ENCODE measurements at regions of chr5 and their contacts with region 1.

Region 1: DNA sequence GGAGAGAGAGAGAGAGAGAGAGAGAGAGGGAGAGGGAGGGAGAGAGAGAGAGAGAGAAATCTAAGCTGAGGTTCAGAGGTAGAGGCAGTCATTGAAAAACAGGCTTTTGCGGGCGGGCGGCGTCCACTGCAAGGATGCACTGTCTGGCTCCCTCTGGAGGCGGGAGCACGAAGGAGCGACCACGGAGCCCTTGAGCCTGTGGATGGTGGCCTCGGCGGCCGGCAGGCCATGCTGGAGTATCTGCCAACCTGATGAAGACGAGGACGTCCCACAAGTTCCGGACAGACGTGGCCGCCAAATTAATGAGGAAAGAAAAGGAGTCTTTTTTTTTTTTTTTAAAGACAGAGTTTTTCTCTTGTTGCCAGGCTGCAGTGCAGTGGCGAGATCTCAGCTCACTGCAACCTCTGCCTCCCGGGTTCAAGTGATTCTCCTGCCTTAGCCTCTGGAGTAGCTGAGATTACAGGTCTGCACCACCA is 2.2 kb upstream of the CCDC125 start:
- DNase-seq: peak; percentile 13 to 92
- H3K4me3 ChIP-seq: peak overlapping the region in 1 of 2 donors; percentile 22
- H3K27ac ChIP-seq: no peak overlapping the region
- H3K4me1 ChIP-seq: peaks cover 0 to 9% of the 10 kb centered on the region in 2 donors
- H3K27me3 ChIP-seq: no peaks in the 10 kb centered on the region
- CTCF ChIP-seq: peak; percentile 61 to 86 (median 82)

Region 2: GRCh38 chr5:68983959-68984358 is 350.9 kb before region 1 on chr5:
- intact Hi-C with region 1: no loop called
- DNase-seq: no peak
- H3K4me3 ChIP-seq: no peak overlapping the region
- H3K27ac ChIP-seq: no peak overlapping the region
- H3K4me1 ChIP-seq: no peaks in the 10 kb centered on the region
- H3K27me3 ChIP-seq: no peaks in the 10 kb centered on the region
- CTCF ChIP-seq: no peak

Region 3: DNA sequence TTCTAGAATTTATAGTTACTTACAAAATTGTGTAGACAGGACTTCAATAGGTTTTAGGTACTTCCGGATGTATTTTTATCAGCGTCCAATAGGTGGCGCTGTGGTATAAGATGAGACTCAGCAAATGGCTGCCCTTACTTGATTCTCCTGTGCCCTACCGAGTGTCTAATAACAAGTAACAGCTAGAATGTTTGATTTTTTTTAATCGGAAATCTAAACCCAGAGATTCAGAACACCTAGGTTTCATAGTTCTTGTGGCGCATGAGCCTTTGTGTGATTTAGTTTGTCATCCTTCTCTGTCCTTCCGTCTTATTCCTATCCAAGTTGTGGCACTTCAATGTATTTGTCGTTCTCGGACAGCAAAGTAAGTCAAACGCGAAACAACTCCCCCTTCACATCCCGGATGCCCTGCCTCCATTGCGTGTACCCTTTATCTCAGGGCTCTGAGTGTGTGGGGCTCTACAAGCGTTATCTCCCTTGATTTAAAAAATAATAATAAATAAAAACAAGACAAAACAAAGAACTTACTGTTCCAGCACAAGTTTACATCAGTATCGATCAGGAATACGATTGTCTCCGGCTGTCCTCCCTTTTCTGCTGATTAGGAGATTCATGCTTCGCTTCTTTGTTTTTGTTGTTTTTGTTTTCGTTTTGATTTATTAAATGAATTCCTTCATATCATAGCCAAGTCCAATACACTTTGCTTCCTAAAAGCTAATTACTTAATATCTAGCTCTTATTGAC is 291.7 kb before region 1 on chr5:
- intact Hi-C with region 1: loop called (anchors 1 kb)
- DNase-seq: peak; percentile 15 to 88
- H3K4me3 ChIP-seq: peak overlapping the region; percentile 57 to 62
- H3K27ac ChIP-seq: peak overlapping the region; percentile 54 to 60
- H3K4me1 ChIP-seq: no peaks in the 10 kb centered on the region
- H3K27me3 ChIP-seq: no peaks in the 10 kb centered on the region
- CTCF ChIP-seq: peak; percentile 61 to 84 (median 83)

Region 4: DNA sequence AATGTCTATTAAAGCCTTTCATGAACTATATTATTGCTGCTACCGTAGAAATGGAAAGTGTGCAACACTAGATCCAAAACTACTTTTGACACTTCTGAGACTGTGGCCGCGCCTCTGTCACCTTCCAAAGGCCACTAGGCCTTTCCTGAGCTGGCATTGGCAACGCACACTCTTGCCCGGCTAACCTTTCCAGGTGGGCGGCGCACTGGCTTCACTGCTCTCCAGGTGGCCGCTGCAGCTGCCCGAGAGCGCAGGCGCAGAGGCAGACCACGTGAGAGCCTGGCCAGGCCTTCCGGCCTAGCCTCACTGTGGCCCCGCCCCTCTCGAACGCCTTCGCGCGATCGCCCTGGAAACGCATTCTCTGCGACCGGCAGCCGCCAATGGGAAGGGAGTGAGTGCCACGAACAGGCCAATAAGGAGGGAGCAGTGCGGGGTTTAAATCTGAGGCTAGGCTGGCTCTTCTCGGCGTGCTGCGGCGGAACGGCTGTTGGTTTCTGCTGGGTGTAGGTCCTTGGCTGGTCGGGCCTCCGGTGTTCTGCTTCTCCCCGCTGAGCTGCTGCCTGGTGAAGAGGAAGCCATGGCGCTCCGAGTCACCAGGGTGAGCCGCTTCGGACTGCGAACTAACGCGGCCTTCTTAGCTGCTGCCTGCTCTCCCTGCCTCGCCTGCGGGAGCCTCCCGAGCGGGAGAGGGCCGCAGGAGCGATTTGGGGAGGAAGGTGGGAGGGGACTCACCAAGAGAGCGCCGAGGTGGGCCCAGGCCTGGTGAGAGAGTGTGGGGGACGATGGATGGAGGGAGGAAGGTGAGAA is 167.9 kb before region 1 on chr5 and contains the start of gene CCNB1:
- intact Hi-C with region 1: loop called (anchors 2 kb)
- DNase-seq: peak; percentile 90 to 98
- H3K4me3 ChIP-seq: peak within 1 kb of the TSS; percentile 58 to 77
- H3K27ac ChIP-seq: peak within 1 kb of the TSS in 1 of 2 donors; percentile 34
- H3K4me1 ChIP-seq: peaks cover 0 to 8% of the 10 kb centered on the region in 2 donors
- H3K27me3 ChIP-seq: no peaks in the 10 kb centered on the region
- CTCF ChIP-seq: no peak
- total RNA-seq, gene CCNB1: 16.0 TPM

Region 5: GRCh38 chr5:69234457-69235268 is 100.2 kb before region 1 on chr5 and contains the start of gene CDK7:
- intact Hi-C with region 1: loop called (anchors 2 kb)
- DNase-seq: peak; percentile 75 to 97
- H3K4me3 ChIP-seq: peak within 1 kb of the TSS; percentile 85 to 87
- H3K27ac ChIP-seq: peak within 1 kb of the TSS; percentile 83 to 87
- H3K4me1 ChIP-seq: peaks cover 0 to 12% of the 10 kb centered on the region in 2 donors
- H3K27me3 ChIP-seq: no peaks in the 10 kb centered on the region
- CTCF ChIP-seq: no peak
- total RNA-seq, gene CDK7: 94.3 TPM

Region 6: GRCh38 chr5:69369369-69370121 is 34.7 kb after region 1 on chr5 and contains the starts of genes AK6, RAD17 and TAF9:
- intact Hi-C with region 1: loop called (anchors 2 kb)
- DNase-seq: peak; percentile 73 to 94
- H3K4me3 ChIP-seq: peak within 1 kb of the TSS; percentile 70 to 81
- H3K27ac ChIP-seq: peak within 1 kb of the TSS; percentile 90 to 94
- H3K4me1 ChIP-seq: peaks cover 7 to 18% of the 10 kb centered on the region in 2 donors
- H3K27me3 ChIP-seq: no peaks in the 10 kb centered on the region
- CTCF ChIP-seq: no peak
- total RNA-seq, gene AK6: 3.9 TPM
- total RNA-seq, gene RAD17: 24.4 TPM
- total RNA-seq, gene TAF9: 6.3 TPM